ENCODE measurements at regions of chr17 and their contacts with region 1.

Region 1: GRCh38 chr17:1724506-1725362 is at the start of gene WDR81:
- DNase-seq: peak; percentile 94
- ATAC-seq: peak; percentile 79
- H3K4me3 Mint-ChIP-seq: peak within 1 kb of the TSS; percentile 77
- H3K27ac Mint-ChIP-seq: peak within 1 kb of the TSS; percentile 82
- H3K4me1 Mint-ChIP-seq: peaks cover 46% of the 10 kb centered on the region
- H3K27me3 Mint-ChIP-seq: no peaks in the 10 kb centered on the region
- total RNA-seq, gene WDR81: 29.4 to 30.8 TPM

Region 2: DNA sequence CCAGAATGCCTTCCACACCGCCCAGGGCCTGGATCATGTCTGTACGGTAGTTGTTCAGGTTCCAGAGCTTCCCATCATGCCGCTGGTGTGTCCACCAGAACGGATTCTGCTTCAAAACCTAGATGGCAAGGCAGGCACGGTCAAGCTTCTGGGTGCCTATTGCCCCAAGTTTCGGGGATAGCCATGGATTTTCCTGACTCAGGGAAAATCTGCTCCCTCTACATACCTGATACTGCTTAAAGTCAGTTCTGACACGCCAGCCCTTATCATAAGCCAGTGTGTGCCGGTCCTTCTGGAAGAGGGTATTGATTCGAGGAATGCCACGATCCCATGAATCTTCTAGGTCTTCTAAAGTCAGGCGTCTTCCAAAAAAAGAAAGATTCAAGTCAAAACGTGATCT is 63.7 kb before region 1 on chr17:
- CTCF ChIA-PET with region 1: no interaction called
- POLR2A ChIA-PET with region 1: no interaction called
- DNase-seq: no peak
- ATAC-seq: no peak
- H3K4me3 Mint-ChIP-seq: no peak overlapping the region
- H3K27ac Mint-ChIP-seq: no peak overlapping the region
- H3K4me1 Mint-ChIP-seq: no peaks in the 10 kb centered on the region
- H3K27me3 Mint-ChIP-seq: no peaks in the 10 kb centered on the region

Region 3: GRCh38 chr17:1744551-1745512 is 20.1 kb after region 1 on chr17:
- CTCF ChIA-PET with region 1: no interaction called
- POLR2A ChIA-PET with region 1: no interaction called
- DNase-seq: no peak
- ATAC-seq: no peak
- H3K4me3 Mint-ChIP-seq: no peak overlapping the region
- H3K27ac Mint-ChIP-seq: no peak overlapping the region
- H3K4me1 Mint-ChIP-seq: no peaks in the 10 kb centered on the region
- H3K27me3 Mint-ChIP-seq: no peaks in the 10 kb centered on the region

Region 4: GRCh38 chr17:1769822-1770477 is 45.2 kb after region 1 on chr17:
- CTCF ChIA-PET with region 1: interaction called, 38 read pairs
- POLR2A ChIA-PET with region 1: no interaction called
- DNase-seq: peak; percentile 43
- ATAC-seq: peak; percentile 64
- H3K4me3 Mint-ChIP-seq: peak overlapping the region; percentile 44
- H3K27ac Mint-ChIP-seq: peak overlapping the region; percentile 64
- H3K4me1 Mint-ChIP-seq: peaks cover 25% of the 10 kb centered on the region
- H3K27me3 Mint-ChIP-seq: no peaks in the 10 kb centered on the region

Region 5: DNA sequence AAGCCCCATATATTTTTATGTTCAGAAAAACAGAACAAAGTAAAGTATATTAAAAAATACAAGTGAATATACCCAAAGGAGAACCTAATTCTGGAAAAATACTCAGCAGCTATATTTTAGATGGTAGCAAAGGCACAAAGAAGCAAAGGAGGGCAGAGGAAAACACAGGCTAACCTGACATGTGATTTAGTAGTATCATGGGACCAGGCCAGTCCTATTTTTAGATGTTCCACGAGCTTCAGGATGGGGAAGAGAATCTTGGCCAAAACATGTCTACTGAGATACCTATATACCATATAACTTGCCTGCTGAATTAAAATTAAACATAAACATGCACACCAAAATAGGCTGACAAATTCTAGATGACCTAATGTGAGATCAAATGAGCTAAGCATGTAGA is 72.1 kb after region 1 on chr17:
- CTCF ChIA-PET with region 1: interaction called, 20 read pairs
- POLR2A ChIA-PET with region 1: no interaction called
- DNase-seq: no peak
- ATAC-seq: no peak
- H3K4me3 Mint-ChIP-seq: no peak overlapping the region
- H3K27ac Mint-ChIP-seq: no peak overlapping the region
- H3K4me1 Mint-ChIP-seq: peaks cover 3% of the 10 kb centered on the region
- H3K27me3 Mint-ChIP-seq: no peaks in the 10 kb centered on the region

Region 6: GRCh38 chr17:1865252-1866037 is 140.7 kb after region 1 on chr17:
- CTCF ChIA-PET with region 1: interaction called, 44 read pairs
- POLR2A ChIA-PET with region 1: interaction called, 3 read pairs
- DNase-seq: peak; percentile 70
- ATAC-seq: peak; percentile 59
- H3K4me3 Mint-ChIP-seq: no peak overlapping the region
- H3K27ac Mint-ChIP-seq: no peak overlapping the region
- H3K4me1 Mint-ChIP-seq: peaks cover 20% of the 10 kb centered on the region
- H3K27me3 Mint-ChIP-seq: no peaks in the 10 kb centered on the region

Region 7: DNA sequence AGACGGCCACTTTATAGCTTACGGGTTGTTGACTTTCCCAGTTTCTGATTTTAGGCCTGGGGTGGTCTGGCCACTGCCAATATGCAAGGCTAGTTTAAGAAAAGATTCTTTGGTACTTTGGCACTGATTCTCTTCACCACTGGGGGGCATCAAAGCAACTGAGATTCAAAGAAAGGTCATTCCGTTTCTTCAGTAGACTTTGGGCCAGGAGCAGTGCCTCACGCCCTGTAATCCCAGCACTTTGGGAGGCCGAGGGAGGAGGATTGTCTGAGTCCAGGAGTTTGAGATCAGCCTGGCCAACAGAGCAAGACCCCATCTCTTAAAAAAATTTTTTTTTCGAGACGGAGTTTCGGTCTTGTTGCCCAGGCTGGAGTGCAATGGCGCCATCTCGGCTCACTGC is 158.1 kb after region 1 on chr17:
- CTCF ChIA-PET with region 1: interaction called, 12 read pairs
- POLR2A ChIA-PET with region 1: interaction called, 4 read pairs
- DNase-seq: peak; percentile 50
- ATAC-seq: peak; percentile 65
- H3K4me3 Mint-ChIP-seq: no peak overlapping the region
- H3K27ac Mint-ChIP-seq: no peak overlapping the region
- H3K4me1 Mint-ChIP-seq: no peaks in the 10 kb centered on the region
- H3K27me3 Mint-ChIP-seq: no peaks in the 10 kb centered on the region

Region 8: GRCh38 chr17:1931759-1932579 is 207.2 kb after region 1 on chr17:
- CTCF ChIA-PET with region 1: no interaction called
- POLR2A ChIA-PET with region 1: no interaction called
- DNase-seq: no peak
- ATAC-seq: no peak
- H3K4me3 Mint-ChIP-seq: no peak overlapping the region
- H3K27ac Mint-ChIP-seq: no peak overlapping the region
- H3K4me1 Mint-ChIP-seq: no peaks in the 10 kb centered on the region
- H3K27me3 Mint-ChIP-seq: no peaks in the 10 kb centered on the region

Region 9: GRCh38 chr17:2094891-2095535 is 370.3 kb after region 1 on chr17:
- CTCF ChIA-PET with region 1: no interaction called
- POLR2A ChIA-PET with region 1: no interaction called
- DNase-seq: no peak
- ATAC-seq: no peak
- H3K4me3 Mint-ChIP-seq: no peak overlapping the region
- H3K27ac Mint-ChIP-seq: no peak overlapping the region
- H3K4me1 Mint-ChIP-seq: peaks cover 45% of the 10 kb centered on the region
- H3K27me3 Mint-ChIP-seq: no peaks in the 10 kb centered on the region